ENCODE measurements at regions of chr17 and their contacts with region 1.

Region 1: DNA sequence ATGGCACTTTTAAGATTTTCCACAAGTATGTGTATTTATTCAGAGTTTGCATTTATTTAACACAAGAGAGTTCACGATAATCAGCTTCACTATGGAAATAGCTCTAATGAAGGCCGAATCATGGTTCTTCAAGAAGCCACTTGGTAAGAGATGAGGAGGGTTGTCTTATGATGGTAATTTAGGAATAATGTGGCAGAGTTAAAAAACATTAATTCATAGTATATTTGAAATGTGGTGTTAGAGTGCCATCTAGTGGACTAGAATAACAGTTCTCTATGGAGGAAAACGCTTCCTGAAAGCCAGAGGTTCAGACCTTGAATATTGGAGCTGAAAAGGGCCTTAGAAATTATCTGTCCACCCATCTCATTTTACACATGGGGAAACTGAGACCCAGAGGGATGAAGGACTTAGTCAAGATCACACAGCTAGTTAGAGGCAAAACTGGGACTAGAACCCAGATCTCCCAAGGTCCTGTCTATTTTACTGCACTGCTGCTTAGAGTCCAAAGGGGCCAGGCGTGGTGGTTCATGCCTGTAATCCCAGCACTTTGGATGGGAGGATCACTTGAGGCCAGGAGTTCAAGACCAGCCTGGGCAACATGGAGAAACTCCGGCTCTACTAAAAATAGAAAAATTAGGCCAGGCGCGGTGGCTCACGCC is 33.8 kb upstream of the KPNB1 start:
- DNase-seq: peak in 1 of 2 experiments; percentile 72
- H3K4me3 ChIP-seq: no peak overlapping the region
- H3K4me1 ChIP-seq: no peaks in the 10 kb centered on the region
- H3K27me3 ChIP-seq: no peaks in the 10 kb centered on the region

Region 2: DNA sequence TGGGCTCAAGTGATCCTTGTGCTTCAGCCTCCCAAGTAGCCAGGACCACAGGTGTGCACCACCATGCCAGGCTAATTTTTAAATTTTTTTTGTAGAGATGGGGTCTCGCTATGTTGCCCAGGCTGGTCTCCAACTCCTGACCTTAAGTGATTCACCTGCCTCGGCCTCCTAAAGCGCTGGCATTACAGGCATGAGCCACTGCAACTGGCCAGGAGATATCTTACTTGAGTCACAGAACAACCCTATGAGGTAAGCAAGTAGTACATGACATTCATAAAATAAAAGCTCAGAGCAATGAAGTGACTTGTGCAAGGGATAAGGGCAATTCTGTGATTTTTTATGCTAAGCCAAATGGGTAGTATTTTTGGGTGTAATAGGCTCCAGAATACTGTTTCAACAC is 484.1 kb before region 1 on chr17:
- in situ Hi-C with region 1: loop called (anchors 25 kb)
- DNase-seq: no peak
- H3K4me3 ChIP-seq: no peak overlapping the region
- H3K4me1 ChIP-seq: no peaks in the 10 kb centered on the region
- H3K27me3 ChIP-seq: no peaks in the 10 kb centered on the region

Region 3: DNA sequence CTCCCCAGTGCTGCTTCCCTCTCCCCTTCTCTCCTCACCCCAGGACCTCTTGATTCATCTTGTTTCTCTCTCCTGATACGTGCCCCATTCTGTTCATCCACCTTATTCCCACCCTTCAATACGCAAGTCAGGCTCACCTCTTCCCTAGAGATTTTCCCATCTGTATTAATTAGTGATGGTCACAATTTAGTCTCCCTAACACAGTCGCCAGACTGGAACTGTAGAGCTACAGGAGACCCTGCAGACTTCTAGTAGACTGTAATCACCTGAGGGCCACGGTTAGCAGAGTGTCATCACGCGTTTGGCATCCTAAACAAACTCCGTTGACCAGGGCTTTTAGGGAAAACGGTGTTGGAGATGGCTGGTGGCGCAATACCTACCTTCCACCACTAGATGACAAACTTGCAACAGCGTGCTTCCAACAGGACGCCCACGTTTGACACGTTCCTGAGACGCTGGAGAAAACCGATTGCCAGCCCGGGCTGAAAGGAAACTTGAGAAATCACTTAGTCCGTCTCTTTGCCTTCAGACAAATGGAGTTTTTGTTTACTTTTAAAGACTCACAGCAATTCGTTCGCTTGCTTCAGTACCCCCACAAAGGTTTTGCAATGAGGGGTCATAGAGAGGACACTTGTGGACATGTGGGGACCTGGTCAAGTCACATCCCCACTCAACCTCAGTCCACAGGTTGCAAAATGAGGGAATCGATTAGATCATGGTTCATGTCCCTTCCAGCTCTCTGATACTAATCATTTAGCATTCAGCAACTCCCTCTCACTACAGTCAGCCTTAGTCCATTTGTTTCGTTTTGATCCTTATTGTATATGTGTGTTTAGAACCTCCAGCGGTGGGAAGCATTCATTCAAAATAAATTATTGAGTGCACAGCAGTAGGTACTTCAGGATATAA is 386.1 kb before region 1 on chr17:
- in situ Hi-C with region 1: loop called (anchors 25 kb)
- DNase-seq: peak; percentile 76 to 87
- H3K4me3 ChIP-seq: no peak overlapping the region
- H3K4me1 ChIP-seq: peaks cover 5% of the 10 kb centered on the region; the same call in 1 of the 2 replicates
- H3K27me3 ChIP-seq: no peaks in the 10 kb centered on the region

Region 4: GRCh38 chr17:47368262-47368661 is 247.6 kb before region 1 on chr17:
- in situ Hi-C with region 1: loop called (anchors 25 kb)
- DNase-seq: no peak
- H3K4me3 ChIP-seq: no peak overlapping the region
- H3K4me1 ChIP-seq: no peaks in the 10 kb centered on the region
- H3K27me3 ChIP-seq: no peaks in the 10 kb centered on the region; the same call in 1 of the 2 replicates